ENCODE measurements at regions of chr15 and their contacts with region 1.

Region 1: GRCh38 chr15:92808978-92809879 is 90.9 kb upstream of the CHD2 start:
- DNase-seq: peak; percentile 100

Region 2: DNA sequence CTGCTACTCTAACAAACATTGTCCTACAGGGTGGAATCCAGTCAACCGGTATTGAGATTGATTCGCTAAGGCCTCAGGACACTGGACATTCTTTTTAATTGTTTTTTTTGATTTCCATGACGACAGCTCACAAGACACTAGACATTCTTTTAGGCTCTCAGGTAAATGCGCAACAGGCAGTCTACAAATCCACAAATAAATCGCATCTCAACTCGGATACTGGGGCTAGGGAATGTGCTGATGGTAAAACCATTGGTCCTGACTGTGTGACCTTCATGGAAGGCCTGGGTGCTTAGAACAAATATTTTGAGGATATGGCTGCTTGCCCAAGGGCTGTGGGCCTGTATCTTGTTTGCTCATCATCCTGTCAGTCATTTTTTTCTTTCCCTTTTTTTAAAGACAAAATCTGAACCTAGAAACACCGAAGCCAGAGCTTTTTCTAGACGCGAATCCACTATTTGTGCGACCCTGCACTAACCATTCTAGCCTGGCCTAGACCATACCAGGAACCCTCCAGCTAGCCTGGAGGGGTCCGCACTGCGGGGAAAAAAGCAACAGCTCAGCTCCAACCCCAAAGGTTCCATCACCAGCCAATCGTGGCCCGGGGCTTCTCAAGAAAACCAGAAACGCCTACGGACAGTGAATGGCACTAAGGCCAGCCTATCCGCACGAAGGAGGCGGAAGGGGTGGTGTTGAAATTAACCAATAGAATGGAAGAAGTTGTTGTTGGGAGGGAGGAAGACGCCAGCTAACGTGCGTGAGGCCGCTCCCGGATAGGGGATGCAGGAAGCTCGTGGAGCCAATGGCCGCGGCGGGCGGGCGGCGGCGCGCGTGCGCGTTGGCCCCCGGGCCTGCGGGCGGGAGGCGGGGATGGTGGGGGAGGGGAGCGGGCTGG is 72.8 kb after region 1 on chr15:
- intact Hi-C with region 1: loop called in 1 of 2 experiments (anchors 5 kb)
- DNase-seq: peak; percentile 99

Region 3: GRCh38 chr15:92903941-92904831 is 95.0 kb after region 1 on chr15:
- intact Hi-C with region 1: loop called (anchors 5 kb)
- DNase-seq: peak; percentile 100

Region 4: GRCh38 chr15:92917606-92918407 is 108.6 kb after region 1 on chr15:
- intact Hi-C with region 1: loop called in 1 of 2 experiments (anchors 5 kb)
- DNase-seq: peak; percentile 97

Measured in posterior vena cava (tissue), 2 donors.